ENCODE measurements at regions of chr11 and their contacts with region 1.

Region 1: GRCh38 chr11:925496-926321 is at the start of gene AP2A2:
- DNase-seq: peak; percentile 96
- ATAC-seq: peak; percentile 90
- H3K4me3 Mint-ChIP-seq: peak within 1 kb of the TSS; percentile 81
- H3K27ac Mint-ChIP-seq: peak within 1 kb of the TSS; percentile 56
- H3K4me1 Mint-ChIP-seq: peaks cover 25% of the 10 kb centered on the region
- H3K27me3 Mint-ChIP-seq: no peaks in the 10 kb centered on the region
- CTCF ChIP-seq: peak; percentile 51
- total RNA-seq, gene AP2A2: 49.6 and 54.3 TPM in 2 replicates

Region 2: GRCh38 chr11:910589-911195 is 15.0 kb before region 1 on chr11 and contains the start of gene CHID1:
- CTCF ChIA-PET with region 1: interaction called, 6 read pairs
- POLR2A ChIA-PET with region 1: interaction called, 12 read pairs
- intact Hi-C with region 1: loop called (anchors 1 kb)
- DNase-seq: peak; percentile 91
- ATAC-seq: peak; percentile 95
- H3K4me3 Mint-ChIP-seq: peak within 1 kb of the TSS; percentile 90
- H3K27ac Mint-ChIP-seq: peak within 1 kb of the TSS; percentile 72
- H3K4me1 Mint-ChIP-seq: peaks cover 31% of the 10 kb centered on the region
- H3K27me3 Mint-ChIP-seq: no peaks in the 10 kb centered on the region
- CTCF ChIP-seq: no peak
- total RNA-seq, gene CHID1: 43.9 and 45.7 TPM in 2 replicates

Region 3: DNA sequence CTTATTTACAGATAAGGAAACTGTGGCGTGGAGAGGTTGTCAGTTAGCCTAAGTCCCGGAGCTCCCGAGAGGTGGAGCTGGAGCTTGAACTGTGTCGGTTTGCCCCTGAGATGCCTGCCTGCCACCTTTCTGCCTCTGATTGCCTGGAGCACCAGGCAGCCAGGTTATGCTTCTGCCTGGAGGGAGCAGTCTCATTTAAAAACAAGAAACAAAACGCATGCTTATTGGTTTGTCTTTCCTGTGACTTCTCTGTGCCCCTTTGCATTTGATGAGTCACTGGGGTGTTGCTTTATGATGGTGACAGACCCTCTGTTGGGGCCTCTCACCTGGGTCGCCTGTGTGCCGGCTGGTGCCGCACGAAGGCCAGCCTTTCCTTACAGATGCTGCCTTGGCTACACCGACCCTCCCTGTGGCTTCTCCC is 12.1 kb after region 1 on chr11:
- CTCF ChIA-PET with region 1: no interaction called
- POLR2A ChIA-PET with region 1: no interaction called
- intact Hi-C with region 1: no loop called
- DNase-seq: no peak
- ATAC-seq: no peak
- H3K4me3 Mint-ChIP-seq: no peak overlapping the region
- H3K27ac Mint-ChIP-seq: no peak overlapping the region
- H3K4me1 Mint-ChIP-seq: peaks cover 27% of the 10 kb centered on the region
- H3K27me3 Mint-ChIP-seq: no peaks in the 10 kb centered on the region
- CTCF ChIP-seq: no peak

Measured in activated B cell treated with CpG ODN at 0.5 μM for 24 hours (primary cell).